Activated CD4-positive, alpha-beta memory T cell treated with anti-CD3 and anti-CD28 coated beads for 36 hours (primary cell): ENCODE measurements at regions of chr16 and their contacts with region 1.

Region 1: GRCh38 chr16:1194665-1195392 is 30.2 kb downstream of the TPSG1 start:
- DNase-seq: peak; percentile 19
- H3K4me3 Mint-ChIP-seq: no peak overlapping the region
- H3K27ac Mint-ChIP-seq: no peak overlapping the region
- H3K4me1 Mint-ChIP-seq: no peaks in the 10 kb centered on the region
- H3K27me3 Mint-ChIP-seq: peaks cover 3% of the 10 kb centered on the region

Region 2: GRCh38 chr16:1105888-1106620 is 88.8 kb before region 1 on chr16:
- CTCF ChIA-PET with region 1: interaction called, 4 read pairs
- POLR2A ChIA-PET with region 1: no interaction called
- intact Hi-C with region 1: loop called (anchors 1 kb)
- DNase-seq: peak; percentile 53
- H3K4me3 Mint-ChIP-seq: no peak overlapping the region
- H3K27ac Mint-ChIP-seq: no peak overlapping the region
- H3K4me1 Mint-ChIP-seq: no peaks in the 10 kb centered on the region
- H3K27me3 Mint-ChIP-seq: peaks cover 5% of the 10 kb centered on the region

Region 3: GRCh38 chr16:1182316-1182671 is 12.5 kb before region 1 on chr16:
- CTCF ChIA-PET with region 1: no interaction called
- POLR2A ChIA-PET with region 1: no interaction called
- intact Hi-C with region 1: no loop called
- DNase-seq: no peak
- H3K4me3 Mint-ChIP-seq: no peak overlapping the region
- H3K27ac Mint-ChIP-seq: no peak overlapping the region
- H3K4me1 Mint-ChIP-seq: no peaks in the 10 kb centered on the region
- H3K27me3 Mint-ChIP-seq: peaks cover 3% of the 10 kb centered on the region

Region 4: DNA sequence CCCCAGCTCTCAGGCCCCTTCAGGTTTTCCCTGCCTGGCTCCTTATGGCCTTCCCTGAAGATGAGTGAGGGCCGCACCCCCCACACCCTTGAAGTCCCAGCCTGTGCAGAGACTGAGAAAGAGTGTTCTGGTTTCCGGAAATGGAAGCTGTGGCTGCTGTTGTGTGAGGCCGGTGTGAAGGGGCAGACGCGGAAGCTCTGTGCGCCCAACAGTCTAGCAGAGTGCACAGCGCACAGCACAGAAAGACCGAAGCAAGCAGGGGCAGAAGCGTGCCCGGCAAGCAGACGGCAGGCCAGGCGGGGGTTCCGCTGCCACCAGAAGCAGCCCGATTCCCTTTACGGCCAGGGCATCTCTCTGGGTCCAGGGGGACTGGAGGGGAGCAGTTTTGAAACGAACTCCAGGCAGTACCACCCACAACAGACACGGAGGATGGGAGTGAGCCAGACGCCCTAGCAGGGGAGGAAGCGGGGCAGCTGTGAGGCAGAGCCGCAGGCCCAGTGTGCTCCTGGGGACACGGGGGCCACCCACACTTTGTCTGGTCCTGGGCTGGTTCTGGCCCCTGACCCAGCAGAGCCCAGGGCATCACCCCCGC is 13.5 kb after region 1 on chr16:
- CTCF ChIA-PET with region 1: no interaction called
- POLR2A ChIA-PET with region 1: no interaction called
- intact Hi-C with region 1: no loop called
- DNase-seq: no peak
- H3K4me3 Mint-ChIP-seq: peak overlapping the region; percentile 23
- H3K27ac Mint-ChIP-seq: peak overlapping the region; percentile 54
- H3K4me1 Mint-ChIP-seq: no peaks in the 10 kb centered on the region
- H3K27me3 Mint-ChIP-seq: no peaks in the 10 kb centered on the region

Region 5: GRCh38 chr16:1221628-1222552 is 27.1 kb after region 1 on chr16:
- CTCF ChIA-PET with region 1: no interaction called
- POLR2A ChIA-PET with region 1: no interaction called
- intact Hi-C with region 1: no loop called
- DNase-seq: no peak
- H3K4me3 Mint-ChIP-seq: no peak overlapping the region
- H3K27ac Mint-ChIP-seq: no peak overlapping the region
- H3K4me1 Mint-ChIP-seq: no peaks in the 10 kb centered on the region
- H3K27me3 Mint-ChIP-seq: no peaks in the 10 kb centered on the region